ENCODE measurements at regions of chr20 and their contacts with region 1.

Region 1: GRCh38 chr20:37345339-37346230 is at the start of gene SRC:
- DNase-seq: peak; percentile 53
- H3K4me3 ChIP-seq: peak within 1 kb of the TSS; percentile 42 to 70 (median 48)
- H3K27ac ChIP-seq: no peak within 1 kb of the TSS
- H3K4me1 ChIP-seq: peaks cover 16% of the 10 kb centered on the region
- H3K27me3 ChIP-seq: no peaks in the 10 kb centered on the region
- CTCF ChIP-seq: no peak
- POLR2A ChIP-seq: peak; percentile 65
- total RNA-seq, gene SRC: 29.4 and 30.7 TPM in 2 replicates

Region 2: DNA sequence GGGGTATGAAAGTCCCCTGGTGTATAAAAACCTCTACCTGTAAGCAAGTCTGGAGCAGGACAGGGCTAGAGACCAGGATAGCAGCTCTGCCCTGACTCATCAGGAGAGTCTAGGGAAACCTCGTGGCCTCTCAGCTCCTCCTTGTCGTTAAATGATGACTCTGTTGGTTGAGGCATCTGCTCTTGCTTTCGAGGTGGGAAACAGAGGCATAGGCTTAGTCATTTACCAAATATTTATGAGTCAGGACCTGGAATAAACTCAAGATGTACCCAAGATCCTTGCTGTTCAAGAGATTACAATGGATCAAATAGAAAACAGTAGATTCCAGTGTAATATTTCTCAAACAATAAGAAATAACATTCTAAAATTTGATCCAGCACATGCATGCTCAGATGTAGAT is 50.6 kb before region 1 on chr20:
- CTCF ChIA-PET with region 1: interaction called, 4 read pairs
- POLR2A ChIA-PET with region 1: no interaction called
- dilution Hi-C with region 1: no loop called
- intact Hi-C with region 1: loop called (anchors 5 kb)
- DNase-seq: peak; percentile 74
- H3K4me3 ChIP-seq: no peak overlapping the region
- H3K27ac ChIP-seq: peak overlapping the region; percentile 65
- H3K4me1 ChIP-seq: peaks cover 39% of the 10 kb centered on the region
- H3K27me3 ChIP-seq: no peaks in the 10 kb centered on the region
- CTCF ChIP-seq: no peak
- POLR2A ChIP-seq: no peak

Measured in endothelial cell of umbilical vein (primary cell).